ENCODE measurements at regions of chr2 and their contacts with region 1.

Region 1: DNA sequence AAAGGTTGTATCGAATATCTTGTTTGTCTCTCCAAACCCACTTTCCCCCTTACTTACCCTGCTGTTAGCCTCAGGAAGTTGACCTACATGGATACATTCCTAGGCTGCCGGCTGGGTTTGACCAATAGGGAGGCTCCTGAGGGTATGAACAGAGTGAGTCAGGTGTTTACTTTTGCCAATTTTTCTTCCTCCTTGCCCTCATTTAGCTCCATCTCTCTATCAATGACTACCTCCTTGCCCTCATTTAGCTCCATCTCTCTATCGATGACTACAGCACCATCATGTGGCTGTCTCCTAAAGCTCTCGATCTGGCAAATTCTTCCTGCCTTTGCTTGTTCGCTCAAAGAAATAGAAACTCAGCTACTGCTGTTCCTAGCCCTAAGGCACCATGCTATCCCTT is 571.9 kb upstream of the CRIM1 start:
- DNase-seq: no peak
- ATAC-seq: no peak
- H3K4me3 ChIP-seq: no peak overlapping the region
- H3K4me3 Mint-ChIP-seq: no peak overlapping the region
- H3K27ac ChIP-seq: no peak overlapping the region
- H3K27ac Mint-ChIP-seq: no peak overlapping the region
- H3K4me1 ChIP-seq: no peaks in the 10 kb centered on the region
- H3K4me1 Mint-ChIP-seq: no peaks in the 10 kb centered on the region
- H3K27me3 ChIP-seq: no peaks in the 10 kb centered on the region
- H3K27me3 Mint-ChIP-seq: no peaks in the 10 kb centered on the region
- CTCF ChIP-seq: no peak

Region 2: DNA sequence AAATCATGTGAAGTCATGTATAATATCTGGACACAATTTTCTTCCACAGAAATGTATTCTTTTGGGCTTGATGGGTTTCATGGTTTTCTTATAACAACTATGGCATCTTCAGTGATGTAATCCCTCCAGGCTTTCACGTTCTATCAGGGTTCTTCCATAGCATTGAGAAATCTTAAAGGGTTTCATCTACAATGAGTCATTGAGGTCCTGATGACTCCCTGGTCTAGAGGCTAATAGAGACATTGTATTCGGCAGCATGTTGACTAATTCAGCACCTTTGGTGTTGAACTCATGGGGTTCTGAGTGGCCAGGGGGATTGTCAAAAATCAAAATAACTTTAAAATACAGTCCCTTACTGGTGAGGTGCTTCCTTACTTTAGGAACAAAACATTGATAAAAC is 42.2 kb before region 1 on chr2:
- CTCF ChIA-PET with region 1: no interaction called
- POLR2A ChIA-PET with region 1: no interaction called
- intact Hi-C with region 1: loop called (anchors 5 kb)
- DNase-seq: no peak
- ATAC-seq: no peak
- H3K4me3 ChIP-seq: no peak overlapping the region
- H3K4me3 Mint-ChIP-seq: no peak overlapping the region
- H3K27ac ChIP-seq: no peak overlapping the region
- H3K27ac Mint-ChIP-seq: no peak overlapping the region
- H3K4me1 ChIP-seq: no peaks in the 10 kb centered on the region
- H3K4me1 Mint-ChIP-seq: no peaks in the 10 kb centered on the region
- H3K27me3 ChIP-seq: no peaks in the 10 kb centered on the region
- H3K27me3 Mint-ChIP-seq: no peaks in the 10 kb centered on the region
- CTCF ChIP-seq: no peak

Region 3: DNA sequence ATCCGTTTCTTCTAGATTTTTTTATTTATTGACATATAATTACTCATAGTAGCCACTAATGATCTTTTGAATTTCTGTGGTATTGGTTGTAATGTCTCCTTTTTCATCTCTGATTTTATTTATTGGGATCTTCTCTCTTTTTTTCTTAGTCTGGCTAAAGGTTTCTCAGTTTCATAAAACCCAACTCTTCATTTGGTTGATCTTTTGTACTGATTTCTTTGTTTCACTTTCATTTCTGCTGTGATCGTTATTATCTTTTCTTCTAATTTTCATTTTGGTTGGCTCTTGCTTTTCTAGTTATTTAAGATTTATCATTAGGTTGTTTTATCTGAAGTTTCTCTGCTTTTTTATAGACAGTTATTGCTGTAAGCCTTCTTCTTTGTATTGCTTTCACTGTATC is 108.2 kb after region 1 on chr2:
- CTCF ChIA-PET with region 1: no interaction called
- POLR2A ChIA-PET with region 1: no interaction called
- intact Hi-C with region 1: no loop called
- DNase-seq: no peak
- ATAC-seq: no peak
- H3K4me3 ChIP-seq: no peak overlapping the region
- H3K4me3 Mint-ChIP-seq: no peak overlapping the region
- H3K27ac ChIP-seq: no peak overlapping the region
- H3K27ac Mint-ChIP-seq: no peak overlapping the region
- H3K4me1 ChIP-seq: no peaks in the 10 kb centered on the region
- H3K4me1 Mint-ChIP-seq: no peaks in the 10 kb centered on the region
- H3K27me3 ChIP-seq: no peaks in the 10 kb centered on the region
- H3K27me3 Mint-ChIP-seq: no peaks in the 10 kb centered on the region
- CTCF ChIP-seq: no peak